ENCODE measurements at regions of chr16 and their contacts with region 1.

Region 1: DNA sequence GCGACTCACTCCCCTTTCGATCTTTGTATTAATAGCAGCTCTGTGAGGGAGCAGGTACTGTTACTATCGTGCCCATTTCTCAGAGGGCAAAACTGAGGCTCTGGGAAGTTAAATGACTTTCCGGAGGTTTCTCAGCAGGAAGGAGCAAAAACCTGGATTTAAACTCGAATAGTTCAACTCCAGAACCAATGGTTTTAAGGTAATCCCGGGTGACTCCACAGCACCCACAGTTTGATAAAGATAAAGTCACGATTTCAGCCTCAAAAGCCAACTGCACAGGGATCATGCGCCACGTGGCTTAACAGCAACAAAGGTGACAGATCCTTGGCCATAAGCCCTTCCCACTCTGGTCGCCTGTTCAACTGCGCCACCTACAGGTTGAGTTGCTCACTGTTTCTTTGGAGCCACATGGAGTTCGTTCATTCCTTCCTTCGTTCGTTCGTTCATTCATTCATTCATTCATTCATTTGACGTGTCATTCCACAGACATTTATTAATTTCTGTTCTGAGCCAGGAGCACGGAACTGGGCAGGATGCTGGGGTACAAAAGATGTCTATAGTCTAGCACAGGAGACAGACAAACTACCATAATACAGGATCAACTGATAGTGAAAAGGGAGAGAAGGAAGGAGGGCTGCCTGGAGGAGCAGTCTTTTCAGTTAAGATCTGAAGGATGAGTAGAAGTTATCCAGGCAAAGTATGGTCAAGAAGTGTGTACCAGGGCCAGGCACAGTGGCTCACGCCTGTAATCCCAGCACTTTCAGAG is 134.8 kb downstream of the HS3ST2 start:
- DNase-seq: peak; percentile 70
- CTCF ChIP-seq: peak; percentile 48

Region 2: GRCh38 chr16:22961206-22961605 is 12.4 kb after region 1 on chr16:
- CTCF ChIA-PET with region 1: interaction called, 12 read pairs
- POLR2A ChIA-PET with region 1: no interaction called
- DNase-seq: no peak
- CTCF ChIP-seq: no peak